RWPE1 (cell line): ENCODE measurements at regions of chr1 and their contacts with region 1.

Region 1: DNA sequence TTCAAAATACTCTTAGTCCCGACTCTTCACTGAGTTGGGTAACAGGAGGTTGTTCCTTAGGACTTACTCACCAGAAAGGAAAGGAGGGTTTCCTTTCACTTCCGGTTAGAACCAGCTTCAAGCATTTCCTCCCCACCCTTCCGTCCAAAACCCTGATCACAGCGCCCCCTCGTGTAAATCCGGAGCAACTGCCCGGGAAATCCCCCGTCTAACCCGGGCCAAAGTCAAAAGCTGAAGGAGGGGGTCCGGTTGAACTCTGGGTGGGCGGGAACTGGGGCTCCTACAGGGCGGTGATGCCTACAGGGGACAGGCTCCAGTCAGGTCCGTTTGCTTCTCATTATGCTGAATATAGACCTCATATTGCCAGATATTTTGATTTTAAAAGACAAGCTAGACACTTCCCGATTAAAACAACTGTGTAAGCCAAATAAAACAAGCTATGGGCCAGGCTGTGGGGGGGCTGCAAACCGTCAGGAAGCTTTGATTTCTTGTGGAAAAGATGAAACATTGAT is 15.0 kb upstream of the MTARC2 start:
- DNase-seq: peak; percentile 93
- H3K27ac ChIP-seq: peak overlapping the region; percentile 19
- CTCF ChIP-seq: peak; percentile 75

Region 2: GRCh38 chr1:220300442-220301121 is 432.6 kb before region 1 on chr1:
- CTCF ChIA-PET with region 1: interaction called, 18 read pairs
- POLR2A ChIA-PET with region 1: no interaction called
- DNase-seq: peak; percentile 70
- H3K27ac ChIP-seq: peak overlapping the region; percentile 29; the same call in 1 of the 2 replicates
- CTCF ChIP-seq: no peak

Region 3: DNA sequence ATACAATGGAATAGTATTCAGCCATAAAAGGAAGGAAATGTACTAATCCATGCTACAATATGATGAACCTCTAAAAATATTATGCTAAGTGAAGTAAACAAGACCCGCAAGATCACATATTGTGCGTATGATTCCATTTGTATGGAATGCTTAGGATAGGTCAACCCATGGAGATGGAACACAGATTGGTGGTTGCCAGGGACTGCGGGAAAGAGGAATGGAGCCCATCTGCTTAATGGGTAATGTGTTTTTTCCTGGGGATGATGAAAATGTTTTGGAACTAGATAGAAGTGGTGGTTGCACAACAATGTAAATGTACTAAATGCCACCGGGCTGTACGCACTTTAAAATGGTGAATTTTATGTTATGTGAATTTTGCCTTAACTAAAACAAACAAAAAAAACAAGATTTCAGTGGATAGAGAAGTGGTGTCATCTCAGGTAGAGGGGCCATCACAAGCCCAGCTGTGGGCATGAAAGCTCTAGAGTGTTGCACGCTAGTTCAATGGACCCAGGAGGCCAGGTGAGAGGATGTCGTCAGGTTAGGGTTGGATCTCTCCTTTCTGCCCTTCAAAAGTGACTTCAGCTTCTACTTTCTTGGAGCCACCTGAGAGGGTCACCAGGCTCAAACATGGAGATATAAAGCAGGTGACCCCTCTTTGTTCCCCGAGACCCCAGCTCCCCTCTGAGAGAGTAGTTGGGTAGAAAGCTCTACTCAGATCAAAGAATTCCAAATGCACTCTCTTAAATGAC is 40.5 kb before region 1 on chr1:
- CTCF ChIA-PET with region 1: interaction called, 11 read pairs
- POLR2A ChIA-PET with region 1: no interaction called
- DNase-seq: no peak
- H3K27ac ChIP-seq: no peak overlapping the region
- CTCF ChIP-seq: no peak

Region 4: DNA sequence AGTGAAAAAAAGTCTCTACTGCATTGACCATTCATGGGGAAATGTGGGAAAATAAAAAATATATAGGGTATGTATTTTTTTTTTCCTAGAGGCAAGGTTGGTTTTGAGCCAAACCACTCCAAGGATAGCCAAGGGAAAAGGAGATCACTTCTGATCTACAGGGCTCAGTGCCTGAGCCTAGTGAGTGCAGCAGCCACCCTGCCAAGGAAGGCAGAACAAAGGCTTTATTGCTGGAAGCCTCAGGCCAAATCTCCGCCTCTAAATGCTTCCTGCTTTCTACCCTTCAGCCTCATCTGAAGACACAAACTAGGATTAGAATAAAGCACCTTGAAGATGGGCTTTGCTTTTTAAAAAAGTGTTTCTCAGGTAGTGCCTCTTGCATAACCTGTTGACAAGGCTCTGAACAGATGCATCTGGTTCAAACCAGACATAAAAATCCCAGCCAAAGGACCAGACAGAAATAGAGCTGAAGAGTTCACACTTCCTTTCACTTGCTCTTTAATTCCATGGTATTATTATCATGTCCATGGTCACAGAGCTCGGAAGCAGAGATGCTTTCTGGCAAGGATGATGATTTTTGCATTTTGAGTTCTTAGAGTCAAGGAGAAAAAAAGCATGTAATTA is 32.5 kb before region 1 on chr1:
- CTCF ChIA-PET with region 1: interaction called, 11 read pairs
- POLR2A ChIA-PET with region 1: no interaction called
- DNase-seq: no peak
- H3K27ac ChIP-seq: no peak overlapping the region
- CTCF ChIP-seq: no peak

Region 5: GRCh38 chr1:220748089-220748934 is 15.2 kb after region 1 on chr1 and contains the start of gene MTARC2:
- CTCF ChIA-PET with region 1: interaction called, 26 read pairs
- POLR2A ChIA-PET with region 1: no interaction called
- DNase-seq: peak; percentile 54
- H3K27ac ChIP-seq: peak within 1 kb of the TSS; percentile 34
- CTCF ChIP-seq: no peak